ENCODE measurements at regions of chr2 and their contacts with region 1.

Region 1: GRCh38 chr2:231786177-231786916 is at the start of gene COPS7B:
- DNase-seq: peak; percentile 89
- ATAC-seq: peak; percentile 53
- H3K4me3 ChIP-seq: peak within 1 kb of the TSS; percentile 52 to 92 (median 85)
- H3K4me3 Mint-ChIP-seq: peak within 1 kb of the TSS; percentile 85
- H3K27ac ChIP-seq: peak within 1 kb of the TSS; percentile 38 to 73
- H3K27ac Mint-ChIP-seq: peak within 1 kb of the TSS; percentile 90
- H3K4me1 ChIP-seq: peaks cover 32% of the 10 kb centered on the region in 2 donors
- H3K4me1 Mint-ChIP-seq: peaks cover 70% of the 10 kb centered on the region
- H3K27me3 ChIP-seq: no peaks in the 10 kb centered on the region
- H3K27me3 Mint-ChIP-seq: no peaks in the 10 kb centered on the region
- CTCF ChIP-seq: peak; percentile 64
- total RNA-seq, gene COPS7B: 52.7 and 58.5 TPM in 2 replicates

Region 2: GRCh38 chr2:231662028-231662810 is 124.1 kb before region 1 on chr2:
- CTCF ChIA-PET with region 1: no interaction called
- POLR2A ChIA-PET with region 1: no interaction called
- intact Hi-C with region 1: no loop called
- DNase-seq: peak; percentile 100
- ATAC-seq: peak; percentile 76
- H3K4me3 ChIP-seq: peak overlapping the region; percentile 23 to 58 (median 49)
- H3K4me3 Mint-ChIP-seq: peak overlapping the region; percentile 79
- H3K27ac ChIP-seq: peak overlapping the region; percentile 90 to 98
- H3K27ac Mint-ChIP-seq: peak overlapping the region; percentile 96
- H3K4me1 ChIP-seq: peaks cover 44 to 56% of the 10 kb centered on the region in 2 donors
- H3K4me1 Mint-ChIP-seq: peaks cover 58% of the 10 kb centered on the region
- H3K27me3 ChIP-seq: no peaks in the 10 kb centered on the region
- H3K27me3 Mint-ChIP-seq: no peaks in the 10 kb centered on the region
- CTCF ChIP-seq: no peak

Region 3: DNA sequence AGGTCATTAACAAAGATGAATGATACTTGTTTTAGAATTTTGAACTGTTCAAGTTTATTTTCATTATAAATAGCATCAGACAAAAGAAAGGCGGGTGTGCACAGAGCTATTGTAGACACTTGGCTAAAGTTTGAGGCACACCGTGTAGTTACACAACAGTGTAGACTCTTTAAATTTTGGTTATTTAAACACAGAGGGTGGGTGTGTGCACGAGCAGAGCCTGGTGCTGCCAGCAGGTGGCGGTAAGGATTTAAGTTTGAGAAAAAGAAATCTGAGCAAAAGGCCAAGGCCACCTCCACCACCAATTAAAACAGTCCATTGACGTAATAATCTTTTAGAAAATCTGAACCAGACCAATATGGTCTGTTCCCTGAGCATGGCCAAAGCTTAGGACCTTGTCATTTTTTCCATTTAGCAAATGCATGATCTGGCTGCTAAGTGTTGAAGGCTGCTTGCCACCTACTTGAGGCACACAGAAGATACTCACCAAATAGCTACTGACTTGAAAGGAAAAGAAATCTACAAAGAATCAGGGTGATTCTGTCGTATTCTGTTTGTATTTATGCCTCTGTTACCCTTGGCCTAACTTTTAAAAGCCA is 14.2 kb after region 1 on chr2:
- CTCF ChIA-PET with region 1: interaction called, 3 read pairs
- POLR2A ChIA-PET with region 1: no interaction called
- intact Hi-C with region 1: loop called (anchors 1 kb)
- DNase-seq: peak; percentile 23
- ATAC-seq: no peak
- H3K4me3 ChIP-seq: no peak overlapping the region
- H3K4me3 Mint-ChIP-seq: no peak overlapping the region
- H3K27ac ChIP-seq: no peak overlapping the region
- H3K27ac Mint-ChIP-seq: no peak overlapping the region
- H3K4me1 ChIP-seq: no peaks in the 10 kb centered on the region
- H3K4me1 Mint-ChIP-seq: no peaks in the 10 kb centered on the region
- H3K27me3 ChIP-seq: no peaks in the 10 kb centered on the region
- H3K27me3 Mint-ChIP-seq: no peaks in the 10 kb centered on the region
- CTCF ChIP-seq: peak; percentile 71

Region 4: GRCh38 chr2:232204457-232204931 is 418.1 kb after region 1 on chr2:
- CTCF ChIA-PET with region 1: no interaction called
- POLR2A ChIA-PET with region 1: no interaction called
- intact Hi-C with region 1: no loop called
- DNase-seq: no peak
- ATAC-seq: no peak
- H3K4me3 ChIP-seq: no peak overlapping the region
- H3K4me3 Mint-ChIP-seq: no peak overlapping the region
- H3K27ac ChIP-seq: no peak overlapping the region
- H3K27ac Mint-ChIP-seq: no peak overlapping the region
- H3K4me1 ChIP-seq: no peaks in the 10 kb centered on the region
- H3K4me1 Mint-ChIP-seq: peaks cover 3% of the 10 kb centered on the region
- H3K27me3 ChIP-seq: no peaks in the 10 kb centered on the region
- H3K27me3 Mint-ChIP-seq: no peaks in the 10 kb centered on the region
- CTCF ChIP-seq: no peak